K562 (cell line): ENCODE measurements at regions of chr2 and their contacts with region 1.

Region 1: DNA sequence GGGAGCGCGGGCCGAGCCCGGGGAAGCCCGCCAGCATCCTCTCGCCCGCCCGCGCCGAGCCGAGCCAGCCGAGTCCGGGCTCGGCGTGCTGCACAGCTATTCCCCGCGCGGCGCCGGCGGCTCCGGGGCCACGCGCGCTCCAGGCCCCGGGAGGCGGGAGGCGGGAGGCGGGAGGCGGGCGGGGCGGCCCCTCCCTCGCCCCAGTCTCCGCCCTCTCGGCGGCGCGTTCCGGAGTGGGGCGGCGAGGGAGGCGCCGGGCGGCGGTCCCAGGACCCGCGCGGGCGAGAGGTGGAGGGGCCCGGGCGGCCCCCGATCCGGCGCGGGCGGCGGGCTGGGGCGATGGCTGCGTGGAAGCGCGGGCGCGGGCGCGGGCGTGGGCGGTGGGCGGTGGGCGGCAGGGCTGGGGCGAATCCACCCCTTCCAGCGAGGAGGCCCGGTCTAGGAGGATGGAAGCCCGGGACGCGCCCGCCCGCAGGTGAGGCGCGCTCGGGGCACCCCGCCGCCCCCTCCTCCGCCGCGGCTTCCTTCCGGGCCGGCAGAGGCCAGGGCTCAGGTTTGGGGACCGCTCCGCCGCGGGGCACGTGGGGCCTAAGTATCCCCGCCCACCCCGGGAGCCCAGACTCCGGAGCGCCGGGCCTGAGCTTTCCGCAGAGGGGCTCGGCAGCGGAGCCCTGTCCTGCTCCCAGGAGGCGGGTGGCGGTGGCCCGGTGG is at the start of gene ADCY3:
- DNase-seq: peak; percentile 68 to 91 (median 88)
- ATAC-seq: peak; percentile 69
- H3K4me3 ChIP-seq: peak within 1 kb of the TSS; percentile 68
- H3K27ac ChIP-seq: peak within 1 kb of the TSS; percentile 66
- H3K4me1 ChIP-seq: peaks cover 34 to 50% of the 10 kb centered on the region in 2 experiments; a peak in 4 of 5 replicates
- H3K27me3 ChIP-seq: no peaks in the 10 kb centered on the region
- CTCF ChIP-seq: no peak
- EP300 ChIP-seq: no peak
- POLR2A ChIP-seq: no peak
- RAD21 ChIP-seq: no peak
- polyA plus RNA-seq, gene ADCY3: 1.5 to 2.6 TPM

Region 2: DNA sequence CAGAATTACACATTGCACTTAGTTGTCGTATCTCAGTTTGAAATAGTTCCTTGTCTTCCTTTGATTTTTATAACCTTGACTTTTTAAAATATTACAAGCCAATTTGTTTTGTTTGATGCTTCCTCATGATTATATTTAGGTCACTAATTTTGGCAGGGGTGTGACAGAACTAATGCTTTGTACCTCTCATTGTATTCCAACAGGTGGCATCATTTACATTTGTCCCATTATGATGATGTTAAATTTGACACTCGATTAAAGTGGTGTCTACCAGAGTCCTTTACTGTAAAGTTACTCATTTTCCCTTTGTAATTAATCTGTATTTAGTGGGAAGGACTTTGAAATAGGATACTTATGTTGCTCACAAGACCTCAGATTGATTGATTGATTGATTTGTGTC is 931.9 kb before region 1 on chr2:
- CTCF ChIA-PET with region 1: no interaction called
- POLR2A ChIA-PET with region 1: no interaction called
- in situ Hi-C with region 1: no loop called
- intact Hi-C with region 1: no loop called
- DNase-seq: peak in 1 of 4 experiments; percentile 37
- ATAC-seq: peak; percentile 88
- H3K4me3 ChIP-seq: no peak overlapping the region
- H3K27ac ChIP-seq: no peak overlapping the region
- H3K4me1 ChIP-seq: no peaks in the 10 kb centered on the region
- H3K27me3 ChIP-seq: no peaks in the 10 kb centered on the region
- CTCF ChIP-seq: peak; percentile 34 to 73 (median 40); a peak in 4 of 6 replicates
- EP300 ChIP-seq: no peak
- POLR2A ChIP-seq: no peak
- RAD21 ChIP-seq: peak; percentile 61 to 71

Region 3: DNA sequence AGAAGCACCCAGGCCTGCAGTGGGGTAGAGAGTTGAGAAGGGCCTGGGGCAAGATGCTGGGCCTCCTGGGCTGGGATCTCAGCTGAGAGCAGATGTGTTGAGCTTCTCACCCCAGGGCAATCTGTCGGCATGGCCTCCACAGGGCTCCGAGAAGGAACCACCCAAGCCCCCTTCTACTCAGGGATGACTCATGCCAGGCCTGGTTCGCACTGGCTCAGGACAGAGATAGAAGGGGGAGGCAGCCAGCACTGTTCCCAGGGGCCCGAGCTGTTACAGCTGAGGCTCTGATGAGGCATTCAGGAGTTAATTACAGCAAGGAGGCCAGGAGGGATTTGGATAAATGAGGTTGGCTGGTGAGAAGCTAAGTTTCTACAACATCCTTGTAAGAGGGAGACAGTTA is 64.5 kb before region 1 on chr2:
- CTCF ChIA-PET with region 1: no interaction called
- POLR2A ChIA-PET with region 1: no interaction called
- in situ Hi-C with region 1: no loop called
- intact Hi-C with region 1: loop called (anchors 2 kb)
- DNase-seq: no peak
- ATAC-seq: peak; percentile 56
- H3K4me3 ChIP-seq: no peak overlapping the region
- H3K27ac ChIP-seq: no peak overlapping the region
- H3K4me1 ChIP-seq: peaks cover 7% of the 10 kb centered on the region in 2 experiments; a peak in 3 of 5 replicates
- H3K27me3 ChIP-seq: no peaks in the 10 kb centered on the region
- CTCF ChIP-seq: no peak
- EP300 ChIP-seq: no peak
- POLR2A ChIP-seq: no peak
- RAD21 ChIP-seq: no peak